HepG2 (cell line): ENCODE measurements at regions of chr4 and their contacts with region 1.

Region 1: DNA sequence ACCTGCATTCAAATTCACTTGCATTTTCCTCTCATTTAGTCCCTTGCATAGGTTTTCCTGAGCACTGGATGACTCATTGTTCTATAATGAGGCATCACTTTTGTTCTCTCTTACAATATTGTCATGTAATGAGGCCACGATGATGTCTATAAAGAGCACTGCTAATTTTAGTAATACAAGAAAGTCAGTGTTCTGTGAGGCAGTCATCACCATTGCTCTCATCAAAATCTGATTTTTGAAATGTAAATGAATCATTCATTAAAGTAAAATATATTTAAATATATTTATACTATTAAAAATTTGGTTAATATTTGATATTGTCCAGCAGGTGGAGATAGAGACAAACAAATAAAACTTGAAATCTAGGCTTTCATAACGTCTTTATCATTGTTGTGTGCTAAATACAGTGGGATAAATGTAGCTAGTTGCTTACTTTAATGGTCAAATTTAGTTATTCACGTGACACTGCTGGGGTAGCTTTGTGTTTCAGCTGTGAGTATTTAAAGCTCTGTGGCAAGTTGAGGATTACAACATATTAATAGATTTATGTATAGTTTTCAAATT is 15.4 kb downstream of the HMGB2 start:
- DNase-seq: peak; percentile 10
- ATAC-seq: no peak
- H3K4me3 ChIP-seq: no peak overlapping the region
- H3K27ac ChIP-seq: no peak overlapping the region
- H3K4me1 ChIP-seq: no peaks in the 10 kb centered on the region
- H3K27me3 ChIP-seq: no peaks in the 10 kb centered on the region
- CTCF ChIP-seq: peak; percentile 18; the same call in 1 of the 2 replicates
- EP300 ChIP-seq: no peak
- POLR2A ChIP-seq: no peak
- RAD21 ChIP-seq: no peak

Region 2: GRCh38 chr4:173252024-173252935 is 66.5 kb before region 1 on chr4:
- CTCF ChIA-PET with region 1: no interaction called
- POLR2A ChIA-PET with region 1: no interaction called
- in situ Hi-C with region 1: no loop called
- intact Hi-C with region 1: no loop called
- DNase-seq: peak; percentile 22
- ATAC-seq: peak; percentile 50
- H3K4me3 ChIP-seq: no peak overlapping the region
- H3K27ac ChIP-seq: no peak overlapping the region
- H3K4me1 ChIP-seq: no peaks in the 10 kb centered on the region
- H3K27me3 ChIP-seq: no peaks in the 10 kb centered on the region; a peak in 2 of 5 replicates
- CTCF ChIP-seq: no peak
- EP300 ChIP-seq: no peak
- POLR2A ChIP-seq: no peak
- RAD21 ChIP-seq: no peak

Region 3: DNA sequence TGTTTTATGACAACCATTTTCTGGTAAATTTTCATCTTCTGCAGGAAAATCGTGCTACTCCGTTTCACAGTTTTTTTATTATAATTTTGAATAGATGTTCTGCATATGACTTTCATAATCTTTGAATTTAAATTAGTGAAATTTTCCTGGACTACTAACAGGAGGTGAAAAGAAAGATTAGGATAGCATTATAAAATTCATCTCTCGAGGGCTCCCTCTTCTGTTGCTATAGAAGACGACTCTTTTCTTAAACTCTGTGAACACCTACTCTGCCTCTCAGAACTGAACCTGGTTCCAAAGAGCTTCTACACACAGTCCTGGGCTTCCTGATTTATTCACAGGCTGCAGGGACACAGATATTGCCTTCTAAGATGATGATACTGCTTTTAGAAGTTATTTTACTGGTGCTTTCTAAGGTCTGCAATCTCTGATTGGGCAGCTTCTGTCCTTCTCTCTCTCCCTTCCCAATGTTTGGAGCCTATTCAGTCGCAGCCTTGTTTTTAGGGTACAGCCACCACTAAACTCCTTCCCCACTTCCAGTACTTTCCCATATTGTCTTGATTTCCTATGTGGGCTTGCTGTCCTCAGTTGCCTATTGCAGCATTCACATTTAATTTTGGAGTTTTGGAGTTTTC is 42.0 kb after region 1 on chr4:
- CTCF ChIA-PET with region 1: interaction called, 8 read pairs
- POLR2A ChIA-PET with region 1: no interaction called
- in situ Hi-C with region 1: no loop called
- intact Hi-C with region 1: loop called (anchors 1 kb)
- DNase-seq: no peak
- ATAC-seq: peak; percentile 82
- H3K4me3 ChIP-seq: no peak overlapping the region
- H3K27ac ChIP-seq: no peak overlapping the region
- H3K4me1 ChIP-seq: no peaks in the 10 kb centered on the region
- H3K27me3 ChIP-seq: no peaks in the 10 kb centered on the region; a peak in 1 of 5 replicates
- CTCF ChIP-seq: peak; percentile 30
- EP300 ChIP-seq: no peak
- POLR2A ChIP-seq: no peak
- RAD21 ChIP-seq: no peak

Region 4: DNA sequence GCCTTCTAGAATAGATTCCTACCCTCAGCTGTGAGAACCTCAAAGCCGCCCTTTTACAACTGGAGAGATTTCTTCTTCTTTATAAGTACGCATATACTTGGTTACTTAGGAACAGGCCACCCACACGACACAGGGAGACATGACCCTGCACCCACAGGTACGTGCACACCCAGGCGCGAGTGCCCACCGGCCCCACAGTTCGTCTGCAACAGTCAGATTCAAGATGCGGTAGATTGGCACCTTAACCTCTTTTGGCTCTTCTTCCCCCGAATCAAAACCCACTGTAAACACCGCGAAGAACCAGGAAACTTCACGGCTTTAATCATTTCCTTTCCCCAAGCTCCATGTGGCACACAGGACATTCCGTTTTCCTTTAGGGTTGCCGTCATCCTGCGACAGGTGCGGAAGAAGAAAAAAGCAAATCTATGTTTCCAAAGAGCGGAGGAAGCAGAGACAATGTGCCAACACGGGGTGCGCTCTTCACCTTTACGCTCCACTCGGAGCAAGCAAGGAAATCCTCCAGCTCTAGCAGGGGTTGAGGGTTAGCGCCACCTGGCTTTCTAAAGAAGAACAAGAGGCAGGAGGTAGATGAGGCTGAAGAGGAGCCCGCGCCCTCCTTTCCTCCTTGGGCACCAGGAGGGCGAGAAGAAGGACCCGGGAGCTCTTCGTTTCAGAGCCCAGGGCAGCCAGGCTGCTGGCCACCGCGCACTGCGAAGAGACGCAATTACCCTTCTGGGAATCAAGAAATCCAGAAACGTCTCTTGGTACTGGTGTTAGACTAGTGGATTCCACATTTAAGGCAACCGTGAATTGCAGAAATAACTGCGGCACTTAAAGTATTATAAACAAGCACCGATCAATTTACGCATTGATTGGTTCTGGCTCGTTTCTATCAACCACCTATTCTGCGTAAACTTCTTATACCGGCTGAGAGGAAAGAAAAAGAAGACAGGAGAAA is 175.6 kb after region 1 on chr4:
- CTCF ChIA-PET with region 1: no interaction called
- POLR2A ChIA-PET with region 1: no interaction called
- in situ Hi-C with region 1: loop called (anchors 10 kb)
- intact Hi-C with region 1: loop called (anchors 2 kb)
- DNase-seq: peak; percentile 66
- ATAC-seq: peak; percentile 93
- H3K4me3 ChIP-seq: peak overlapping the region in 1 of 3 experiments; percentile 44; a peak in 2 of 6 replicates
- H3K27ac ChIP-seq: no peak overlapping the region
- H3K4me1 ChIP-seq: peaks cover 28% of the 10 kb centered on the region
- H3K27me3 ChIP-seq: peaks cover 0 to 4% of the 10 kb centered on the region in 2 experiments; a peak in 2 of 5 replicates
- CTCF ChIP-seq: peak; percentile 80
- EP300 ChIP-seq: no peak
- POLR2A ChIP-seq: no peak
- RAD21 ChIP-seq: peak; percentile 40